ENCODE measurements at regions of chr5 and their contacts with region 1.

Region 1: DNA sequence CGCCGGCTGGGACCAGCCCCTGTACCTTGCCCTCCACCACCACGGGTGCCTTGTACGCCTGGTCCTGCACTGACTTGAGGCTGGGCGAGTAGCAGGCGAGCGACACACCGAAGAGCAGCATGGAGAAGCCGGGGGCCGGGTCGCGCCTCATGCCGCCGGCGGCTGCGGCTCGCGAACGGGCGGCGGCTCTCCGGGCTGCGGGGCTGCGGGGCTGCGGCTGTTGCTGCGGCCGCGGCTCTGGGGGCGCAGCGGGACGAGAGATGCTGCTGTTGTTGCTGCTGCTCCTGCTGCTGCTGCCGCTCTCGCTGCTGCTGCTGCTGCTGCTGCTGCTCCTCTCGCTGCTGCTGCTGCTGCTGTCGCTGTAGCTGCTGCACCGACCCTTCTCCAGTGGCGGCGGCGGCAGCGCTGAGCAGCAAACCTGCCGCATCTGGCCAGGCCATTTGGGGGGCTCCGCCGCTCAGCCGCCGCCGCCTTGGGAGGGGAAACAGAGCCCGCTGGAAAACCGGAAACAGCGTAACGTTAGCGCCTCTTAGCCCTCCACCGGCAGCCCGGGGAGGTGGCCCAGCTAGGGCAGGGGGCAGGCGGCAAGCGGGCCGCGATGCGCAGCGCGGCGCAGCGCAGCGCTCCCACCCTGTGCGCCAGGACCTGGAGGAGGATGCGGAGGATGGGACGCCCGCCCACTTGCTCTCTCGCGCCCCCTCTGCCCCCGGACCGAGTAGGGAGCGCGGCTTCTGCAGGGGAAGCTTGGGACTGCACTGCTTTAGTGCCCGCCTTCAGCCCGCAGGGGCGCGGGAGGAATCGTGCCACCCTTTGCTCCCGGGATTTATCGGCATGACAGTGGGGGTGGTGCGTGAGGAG is at the start of gene NRG2:
- DNase-seq: peak; percentile 64
- ATAC-seq: peak; percentile 86
- H3K4me3 ChIP-seq: peak within 1 kb of the TSS; percentile 82 to 89
- H3K27ac ChIP-seq: peak within 1 kb of the TSS; percentile 88
- H3K4me1 ChIP-seq: peaks cover 26% of the 10 kb centered on the region
- H3K27me3 ChIP-seq: no peaks in the 10 kb centered on the region
- CTCF ChIP-seq: peak; percentile 84
- total RNA-seq, gene NRG2: 20.2 TPM

Region 2: DNA sequence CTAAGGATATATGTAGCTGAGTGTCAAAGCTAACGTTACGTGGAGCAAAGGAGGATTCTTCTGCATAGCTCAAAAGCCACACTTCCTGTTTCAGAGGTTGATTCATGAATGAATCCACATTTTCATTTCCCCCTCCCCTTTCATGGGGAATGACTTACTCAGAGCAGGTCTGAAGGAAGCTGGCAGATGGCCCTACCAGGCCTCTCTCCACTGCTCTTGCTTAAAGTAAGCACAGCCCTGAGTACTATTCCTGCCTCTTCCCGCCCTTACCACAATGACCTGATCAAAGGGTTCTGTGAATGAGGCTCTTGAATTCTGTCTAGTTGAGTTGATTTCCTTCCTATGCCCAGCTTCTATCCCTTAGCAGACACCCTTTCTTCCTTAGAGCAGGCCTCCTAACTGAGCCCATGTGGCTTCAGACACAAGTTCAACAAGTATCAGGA is 89.1 kb after region 1 on chr5:
- CTCF ChIA-PET with region 1: interaction called, 12 read pairs
- POLR2A ChIA-PET with region 1: no interaction called
- in situ Hi-C with region 1: no loop called
- intact Hi-C with region 1: no loop called
- DNase-seq: no peak
- ATAC-seq: peak; percentile 77
- H3K4me3 ChIP-seq: no peak overlapping the region
- H3K27ac ChIP-seq: no peak overlapping the region
- H3K4me1 ChIP-seq: peaks cover 13% of the 10 kb centered on the region
- H3K27me3 ChIP-seq: no peaks in the 10 kb centered on the region
- CTCF ChIP-seq: no peak

Region 3: GRCh38 chr5:140145818-140146522 is 103.1 kb after region 1 on chr5:
- CTCF ChIA-PET with region 1: no interaction called
- POLR2A ChIA-PET with region 1: interaction called, 12 read pairs
- in situ Hi-C with region 1: no loop called
- intact Hi-C with region 1: no loop called
- DNase-seq: no peak
- ATAC-seq: peak; percentile 78
- H3K4me3 ChIP-seq: peak overlapping the region; percentile 6 to 8; a peak in 2 of 4 replicates
- H3K27ac ChIP-seq: no peak overlapping the region
- H3K4me1 ChIP-seq: peaks cover 5% of the 10 kb centered on the region; the same call in 1 of the 2 replicates
- H3K27me3 ChIP-seq: no peaks in the 10 kb centered on the region
- CTCF ChIP-seq: peak; percentile 80; the same call in 1 of the 2 replicates

Region 4: GRCh38 chr5:140174465-140175366 is 131.8 kb after region 1 on chr5 and contains the start of gene CYSTM1:
- CTCF ChIA-PET with region 1: no interaction called
- POLR2A ChIA-PET with region 1: interaction called, 13 read pairs
- in situ Hi-C with region 1: no loop called
- intact Hi-C with region 1: no loop called
- DNase-seq: peak; percentile 70
- ATAC-seq: peak; percentile 95
- H3K4me3 ChIP-seq: peak within 1 kb of the TSS; percentile 67 to 99
- H3K27ac ChIP-seq: peak within 1 kb of the TSS; percentile 91
- H3K4me1 ChIP-seq: peaks cover 27% of the 10 kb centered on the region
- H3K27me3 ChIP-seq: no peaks in the 10 kb centered on the region
- CTCF ChIP-seq: no peak
- total RNA-seq, gene CYSTM1: 126 TPM

Measured in Panc1 (cell line).